Spleen (tissue), 13 donors: ENCODE measurements at regions of chr1 and their contacts with region 1.

Region 1: GRCh38 chr1:31789259-31790065 is 25.3 kb upstream of the ADGRB2 start:
- DNase-seq: peak; percentile 99
- H3K4me3 ChIP-seq: peak overlapping the region; percentile 64 to 89 (median 70)
- H3K27ac ChIP-seq: peak overlapping the region in 7 of 8 donors; percentile 83 to 93 (median 88)
- H3K4me1 ChIP-seq: peaks cover 0 to 39% (median 17%) of the 10 kb centered on the region in 6 donors
- H3K27me3 ChIP-seq: peaks cover 0 to 4% (median 0%) of the 10 kb centered on the region in 7 donors
- CTCF ChIP-seq: peak; percentile 91 to 99 (median 97)
- POLR2A ChIP-seq: no peak

Region 2: GRCh38 chr1:31576201-31576669 is 213.2 kb before region 1 on chr1 and contains the start of gene TINAGL1:
- intact Hi-C with region 1: loop called (anchors 10 kb)
- DNase-seq: no peak
- H3K4me3 ChIP-seq: peak within 1 kb of the TSS; percentile 52 to 85 (median 68)
- H3K27ac ChIP-seq: peak within 1 kb of the TSS; percentile 48 to 92 (median 84)
- H3K4me1 ChIP-seq: peaks cover 18 to 67% (median 43%) of the 10 kb centered on the region in 6 donors
- H3K27me3 ChIP-seq: peaks cover 0 to 31% (median 6%) of the 10 kb centered on the region in 7 donors
- CTCF ChIP-seq: no peak
- POLR2A ChIP-seq: peak in 2 of 3 donors; percentile 26 to 43
- total RNA-seq, gene TINAGL1: 124 to 393 (median 243) TPM

Region 3: GRCh38 chr1:31663622-31664452 is 125.6 kb before region 1 on chr1:
- intact Hi-C with region 1: loop called (anchors 2 kb)
- DNase-seq: peak; percentile 83
- H3K4me3 ChIP-seq: no peak overlapping the region
- H3K27ac ChIP-seq: no peak overlapping the region
- H3K4me1 ChIP-seq: peaks cover 0 to 23% (median 0%) of the 10 kb centered on the region in 6 donors
- H3K27me3 ChIP-seq: peaks cover 0 to 15% (median 0%) of the 10 kb centered on the region in 7 donors
- CTCF ChIP-seq: peak; percentile 72 to 98 (median 93)
- POLR2A ChIP-seq: no peak